Psoas muscle (tissue), 8 donors: ENCODE measurements at regions of chr4 and their contacts with region 1.

Region 1: DNA sequence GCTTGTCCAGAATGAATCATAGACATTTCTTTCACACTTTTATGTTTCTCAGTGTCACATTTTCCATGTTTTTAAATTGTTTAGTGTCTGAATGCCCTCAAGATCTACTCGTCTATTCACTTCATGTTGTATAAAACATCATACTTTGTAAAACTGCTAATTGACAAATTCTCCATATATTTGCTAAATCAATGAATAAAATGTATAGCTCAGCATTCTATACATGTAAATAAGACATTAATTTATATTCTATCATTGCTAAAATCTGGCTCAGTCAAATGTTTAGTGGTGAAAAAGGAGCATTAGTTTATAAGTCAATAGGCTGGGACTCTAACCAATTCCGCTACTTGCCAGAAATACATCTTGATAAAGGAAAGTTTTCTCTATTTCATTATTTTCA is 379.6 kb downstream of the NAF1 start:
- DNase-seq: no peak
- ATAC-seq: no peak
- H3K4me3 ChIP-seq: no peak overlapping the region
- H3K27ac ChIP-seq: no peak overlapping the region
- H3K4me1 ChIP-seq: no peaks in the 10 kb centered on the region
- H3K27me3 ChIP-seq: no peaks in the 10 kb centered on the region
- CTCF ChIP-seq: no peak

Region 2: DNA sequence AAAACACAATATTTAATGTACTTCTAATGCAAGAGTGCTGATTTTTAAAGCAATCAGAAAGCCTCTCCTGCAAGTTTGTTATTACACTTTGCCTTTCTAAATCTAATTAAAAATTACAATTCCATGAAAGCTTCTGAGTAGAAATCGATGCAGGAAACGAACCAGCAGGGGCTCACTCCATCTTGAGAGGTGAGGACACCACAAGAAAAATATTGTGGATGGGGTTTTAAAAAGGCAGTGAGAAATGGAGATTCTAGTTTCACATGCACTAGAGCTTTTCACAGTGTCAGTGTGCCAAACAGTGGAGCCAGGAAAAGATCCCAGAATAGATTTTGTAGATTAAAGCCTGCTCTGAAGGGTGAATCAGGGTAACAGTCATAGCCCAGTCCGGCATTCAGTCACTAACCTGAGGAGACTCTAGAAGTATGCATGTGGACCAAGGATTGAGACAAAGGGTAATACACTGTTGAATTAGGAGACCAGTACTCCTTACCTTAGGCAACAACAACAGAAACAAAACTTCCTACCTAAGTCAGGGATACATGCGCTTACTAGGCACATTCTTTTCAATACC is 17.3 kb after region 1 on chr4:
- intact Hi-C with region 1: loop called in 1 of 2 experiments (anchors 1 kb)
- DNase-seq: no peak
- ATAC-seq: peak in 3 of 4 donors; percentile 39 to 75 (median 61)
- H3K4me3 ChIP-seq: no peak overlapping the region
- H3K27ac ChIP-seq: no peak overlapping the region
- H3K4me1 ChIP-seq: no peaks in the 10 kb centered on the region
- H3K27me3 ChIP-seq: no peaks in the 10 kb centered on the region
- CTCF ChIP-seq: no peak